ENCODE measurements at regions of chr2 and their contacts with region 1.

Region 1: GRCh38 chr2:86105252-86105968 is at the start of gene POLR1A:
- DNase-seq: peak in 9 of 10 donors; percentile 61 to 90 (median 79)
- ATAC-seq: peak; percentile 79
- H3K4me3 Mint-ChIP-seq: peak within 1 kb of the TSS; percentile 85 to 96 (median 91)
- H3K27ac Mint-ChIP-seq: peak within 1 kb of the TSS; percentile 94 to 100 (median 98)
- H3K4me1 Mint-ChIP-seq: peaks cover 36 to 72% (median 67%) of the 10 kb centered on the region in 4 donors
- H3K27me3 Mint-ChIP-seq: no peaks in the 10 kb centered on the region
- polyA plus RNA-seq, gene POLR1A: 1.1 to 5.7 (median 3.0) TPM

Region 2: GRCh38 chr2:85994421-85994777 is 111.0 kb before region 1 on chr2:
- POLR2A ChIA-PET with region 1: no interaction called
- DNase-seq: no peak
- ATAC-seq: no peak
- H3K4me3 Mint-ChIP-seq: peak overlapping the region in 4 of 10 donors; percentile 48 to 58 (median 50)
- H3K27ac Mint-ChIP-seq: peak overlapping the region in 3 of 10 donors; percentile 30 to 75 (median 69)
- H3K4me1 Mint-ChIP-seq: peaks cover 12 to 65% (median 51%) of the 10 kb centered on the region in 4 donors
- H3K27me3 Mint-ChIP-seq: no peaks in the 10 kb centered on the region

Region 3: DNA sequence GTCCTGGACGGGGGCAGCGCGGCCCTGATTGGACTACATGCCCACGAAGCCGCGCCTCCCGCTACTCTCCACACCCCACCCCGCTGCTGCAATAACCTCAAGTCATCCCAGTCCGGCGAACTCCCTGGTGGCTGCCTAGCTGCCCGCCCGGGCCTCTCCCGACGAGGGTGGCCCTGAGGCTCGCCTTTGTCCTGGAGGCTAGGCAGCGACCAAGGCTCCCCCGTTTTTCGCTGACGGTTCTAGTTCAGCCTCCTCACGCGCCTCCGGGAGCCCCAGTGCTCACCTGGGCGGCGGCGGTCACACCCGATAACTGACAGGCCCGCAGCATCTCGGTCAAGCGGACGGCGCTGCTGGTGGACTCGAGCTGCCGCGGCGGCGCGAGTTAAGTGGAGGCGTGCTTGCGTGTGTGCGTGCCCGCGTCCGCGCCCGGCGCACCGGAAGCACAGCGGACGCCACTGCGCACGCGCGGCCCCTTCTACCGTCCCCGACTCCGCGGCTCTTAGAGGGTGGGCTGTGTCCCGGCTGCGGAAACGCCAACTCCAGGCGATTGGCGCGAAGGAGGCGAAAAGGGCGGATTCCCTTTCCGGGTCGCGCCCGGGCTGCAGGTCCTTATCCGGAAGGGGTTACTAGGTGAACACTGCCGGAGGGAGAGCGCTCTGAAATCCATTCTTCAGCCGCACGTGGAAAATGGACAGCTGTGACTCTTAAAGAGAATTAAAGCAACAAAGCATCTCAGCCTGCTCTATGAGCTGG is 89.8 kb after region 1 on chr2 and contains the start of gene IMMT:
- POLR2A ChIA-PET with region 1: interaction called, 10 read pairs
- DNase-seq: peak; percentile 88 to 97 (median 92)
- ATAC-seq: peak; percentile 89 to 90
- H3K4me3 Mint-ChIP-seq: peak within 1 kb of the TSS; percentile 84 to 98 (median 93)
- H3K27ac Mint-ChIP-seq: peak within 1 kb of the TSS; percentile 89 to 98 (median 96)
- H3K4me1 Mint-ChIP-seq: peaks cover 21 to 69% (median 60%) of the 10 kb centered on the region in 4 donors
- H3K27me3 Mint-ChIP-seq: no peaks in the 10 kb centered on the region
- polyA plus RNA-seq, gene IMMT: 47.5 to 71.9 (median 61.4) TPM